Activated CD4-positive, alpha-beta memory T cell treated with anti-CD3 and anti-CD28 coated beads for 36 hours (primary cell): ENCODE measurements at regions of chr1 and their contacts with region 1.

Region 1: GRCh38 chr1:172638885-172639831 is 19.7 kb upstream of the FASLG start:
- DNase-seq: peak; percentile 93
- H3K4me3 Mint-ChIP-seq: peak overlapping the region; percentile 53
- H3K27ac Mint-ChIP-seq: peak overlapping the region; percentile 98
- H3K4me1 Mint-ChIP-seq: peaks cover 71% of the 10 kb centered on the region
- H3K27me3 Mint-ChIP-seq: peaks cover 20% of the 10 kb centered on the region

Region 2: GRCh38 chr1:172338295-172338735 is 300.8 kb before region 1 on chr1:
- CTCF ChIA-PET with region 1: no interaction called
- POLR2A ChIA-PET with region 1: no interaction called
- intact Hi-C with region 1: loop called (anchors 1 kb)
- DNase-seq: peak; percentile 81
- H3K4me3 Mint-ChIP-seq: no peak overlapping the region
- H3K27ac Mint-ChIP-seq: peak overlapping the region; percentile 69
- H3K4me1 Mint-ChIP-seq: peaks cover 41% of the 10 kb centered on the region
- H3K27me3 Mint-ChIP-seq: no peaks in the 10 kb centered on the region

Region 3: DNA sequence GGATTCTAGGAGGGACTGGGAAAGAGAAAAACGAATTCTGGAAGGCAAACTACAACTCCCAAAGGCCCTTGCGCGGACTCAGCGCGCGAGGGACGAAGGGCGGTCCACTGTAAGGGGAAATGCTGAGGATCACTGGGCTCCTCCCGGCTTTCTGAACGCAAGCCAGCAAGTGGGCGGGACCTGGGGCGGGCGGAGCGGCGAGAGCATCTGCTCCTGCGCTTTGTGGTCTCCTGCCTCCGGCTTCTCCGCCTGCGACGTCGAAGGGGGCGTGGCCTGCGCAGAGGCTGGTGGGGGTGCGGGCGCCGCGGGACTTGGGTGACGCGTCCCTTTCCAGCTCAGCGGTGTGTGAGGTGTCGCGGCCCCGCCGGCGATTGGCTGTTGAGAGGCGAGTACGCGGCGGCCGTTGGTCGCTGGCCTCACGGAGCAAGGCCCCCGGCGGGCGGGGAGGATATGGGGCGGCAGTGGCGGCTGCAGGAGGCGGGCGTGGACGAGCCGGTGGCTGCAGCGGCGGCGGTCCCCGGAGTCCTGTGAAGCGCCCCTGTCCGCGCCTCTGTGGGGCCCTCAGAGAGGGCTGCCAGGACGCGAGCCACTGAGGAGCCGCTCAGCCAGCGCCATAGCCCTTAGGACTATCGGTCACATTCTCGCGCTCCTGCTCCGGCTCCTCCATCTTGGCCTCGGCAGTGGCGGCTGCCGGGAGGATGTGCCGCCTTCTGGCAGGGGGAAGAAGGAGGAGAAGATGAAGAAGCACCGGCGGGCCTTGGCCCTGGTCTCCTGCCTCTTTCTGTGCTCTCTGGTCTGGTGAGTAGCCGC is 106.3 kb before region 1 on chr1 and contains the start of gene SUCO:
- CTCF ChIA-PET with region 1: no interaction called
- POLR2A ChIA-PET with region 1: interaction called, 3 read pairs
- intact Hi-C with region 1: loop called (anchors 1 kb)
- DNase-seq: peak; percentile 100
- H3K4me3 Mint-ChIP-seq: peak within 1 kb of the TSS; percentile 90
- H3K27ac Mint-ChIP-seq: peak within 1 kb of the TSS; percentile 100
- H3K4me1 Mint-ChIP-seq: peaks cover 47% of the 10 kb centered on the region
- H3K27me3 Mint-ChIP-seq: peaks cover 4% of the 10 kb centered on the region
- total RNA-seq, gene SUCO: 18.8 to 20.6 TPM

Region 4: GRCh38 chr1:172662464-172663109 is 23.4 kb after region 1 on chr1:
- CTCF ChIA-PET with region 1: interaction called, 7 read pairs
- POLR2A ChIA-PET with region 1: interaction called, 51 read pairs
- intact Hi-C with region 1: loop called (anchors 1 kb)
- DNase-seq: peak; percentile 97
- H3K4me3 Mint-ChIP-seq: peak overlapping the region; percentile 78
- H3K27ac Mint-ChIP-seq: peak overlapping the region; percentile 91
- H3K4me1 Mint-ChIP-seq: peaks cover 81% of the 10 kb centered on the region
- H3K27me3 Mint-ChIP-seq: peaks cover 10% of the 10 kb centered on the region

Region 5: DNA sequence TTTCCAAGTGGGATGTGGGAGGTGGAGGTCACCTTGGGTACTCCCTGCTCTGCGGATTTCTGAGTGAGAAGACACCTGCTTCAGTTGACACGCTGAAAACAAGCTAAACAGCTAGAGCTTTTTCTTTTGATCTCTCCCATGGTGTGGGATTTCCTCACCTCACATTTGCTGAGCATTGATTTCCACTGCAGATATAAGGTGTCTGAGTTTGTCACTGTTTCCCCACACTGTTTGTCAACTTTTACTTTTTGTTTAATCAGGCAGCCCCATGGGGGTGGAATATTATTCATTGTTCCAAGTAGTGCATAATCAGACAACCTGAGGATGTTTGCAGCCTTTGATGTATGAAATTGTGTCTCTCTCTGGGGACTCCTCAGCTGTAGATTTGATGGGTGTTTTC is 69.3 kb after region 1 on chr1:
- CTCF ChIA-PET with region 1: interaction called, 4 read pairs
- POLR2A ChIA-PET with region 1: interaction called, 7 read pairs
- intact Hi-C with region 1: loop called (anchors 1 kb)
- DNase-seq: peak; percentile 49
- H3K4me3 Mint-ChIP-seq: peak overlapping the region; percentile 48
- H3K27ac Mint-ChIP-seq: peak overlapping the region; percentile 46
- H3K4me1 Mint-ChIP-seq: peaks cover 46% of the 10 kb centered on the region
- H3K27me3 Mint-ChIP-seq: no peaks in the 10 kb centered on the region

Region 6: GRCh38 chr1:172895050-172895460 is 255.9 kb after region 1 on chr1:
- CTCF ChIA-PET with region 1: no interaction called
- POLR2A ChIA-PET with region 1: no interaction called
- intact Hi-C with region 1: loop called (anchors 1 kb)
- DNase-seq: peak; percentile 29
- H3K4me3 Mint-ChIP-seq: peak overlapping the region; percentile 54
- H3K27ac Mint-ChIP-seq: peak overlapping the region; percentile 14
- H3K4me1 Mint-ChIP-seq: peaks cover 38% of the 10 kb centered on the region
- H3K27me3 Mint-ChIP-seq: peaks cover 18% of the 10 kb centered on the region